BJ (cell line): ENCODE measurements at regions of chr1 and their contacts with region 1.

Region 1: DNA sequence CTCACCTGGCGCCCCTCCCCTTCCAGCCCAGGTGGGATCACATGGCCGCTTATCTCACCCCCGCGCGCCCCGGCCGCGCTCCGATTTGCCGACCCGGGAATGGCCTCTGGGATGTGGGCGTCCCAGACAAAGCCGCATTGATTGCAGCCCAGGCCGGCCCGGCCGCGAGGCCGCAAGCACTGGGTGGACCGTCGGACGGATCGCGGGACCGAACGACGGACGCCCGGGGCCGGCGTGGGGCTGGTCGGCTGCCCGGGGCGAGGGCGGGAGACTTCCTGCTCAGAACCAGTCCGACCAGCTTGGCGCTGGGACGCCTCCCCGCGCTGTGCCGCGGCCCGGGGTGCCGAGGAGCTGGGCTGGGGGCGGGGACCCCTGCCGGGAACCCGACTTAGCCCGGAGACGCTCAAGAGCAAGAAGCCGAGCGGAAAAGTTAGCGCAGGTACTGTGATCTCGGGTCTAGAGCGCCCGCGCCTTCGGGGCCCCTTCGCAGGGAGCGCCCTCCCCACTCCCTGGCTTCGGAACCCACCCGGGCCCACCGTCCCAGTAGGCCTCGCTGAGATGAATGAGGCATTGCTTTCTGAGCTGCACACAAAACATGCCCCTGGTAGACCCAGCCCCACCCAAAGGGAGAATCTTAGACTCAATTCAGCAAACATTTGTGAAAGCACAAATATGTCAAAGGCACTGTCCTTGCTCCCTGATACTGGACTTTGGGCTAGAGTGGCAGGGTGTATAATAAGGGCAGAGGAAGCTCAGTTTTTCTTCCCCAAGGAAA is 415 bp upstream of the LAD1 start:
- DNase-seq: no peak
- H3K4me3 ChIP-seq: no peak overlapping the region
- H3K27me3 ChIP-seq: peaks cover 53% of the 10 kb centered on the region
- CTCF ChIP-seq: no peak

Region 2: DNA sequence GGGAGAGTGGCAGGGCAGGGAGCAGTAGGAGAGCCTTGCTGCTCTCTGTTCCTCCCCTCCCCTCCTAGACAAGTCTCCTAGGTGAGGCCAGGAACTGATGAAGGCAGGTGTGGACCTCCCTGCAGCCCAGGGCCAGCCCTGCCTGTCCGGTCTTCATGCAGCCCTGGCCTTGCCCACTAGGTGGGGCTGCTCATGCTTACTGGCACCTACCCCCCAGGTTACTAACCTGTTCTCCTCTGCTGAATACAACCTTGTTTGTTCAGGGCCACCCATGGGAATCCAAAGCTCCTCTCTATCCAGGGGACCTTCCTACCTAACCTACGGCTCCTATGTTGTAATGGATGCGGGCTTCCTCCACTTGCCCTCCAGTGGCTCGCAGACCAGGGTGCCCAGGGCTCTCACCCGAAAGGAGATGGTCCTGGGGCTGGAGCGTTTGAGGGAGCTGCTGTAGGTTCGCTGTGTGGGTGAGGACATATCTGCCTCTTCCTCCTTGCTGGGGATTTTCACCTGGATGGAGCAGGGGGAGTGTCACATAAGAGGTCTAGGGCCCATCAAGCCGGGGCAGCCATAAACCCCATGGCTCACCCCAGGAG is 14.1 kb before region 1 on chr1:
- CTCF ChIA-PET with region 1: interaction called, 59 read pairs
- POLR2A ChIA-PET with region 1: no interaction called
- DNase-seq: no peak
- H3K4me3 ChIP-seq: no peak overlapping the region
- H3K27me3 ChIP-seq: no peaks in the 10 kb centered on the region; the same call in 1 of the 2 replicates
- CTCF ChIP-seq: peak; percentile 90

Region 3: DNA sequence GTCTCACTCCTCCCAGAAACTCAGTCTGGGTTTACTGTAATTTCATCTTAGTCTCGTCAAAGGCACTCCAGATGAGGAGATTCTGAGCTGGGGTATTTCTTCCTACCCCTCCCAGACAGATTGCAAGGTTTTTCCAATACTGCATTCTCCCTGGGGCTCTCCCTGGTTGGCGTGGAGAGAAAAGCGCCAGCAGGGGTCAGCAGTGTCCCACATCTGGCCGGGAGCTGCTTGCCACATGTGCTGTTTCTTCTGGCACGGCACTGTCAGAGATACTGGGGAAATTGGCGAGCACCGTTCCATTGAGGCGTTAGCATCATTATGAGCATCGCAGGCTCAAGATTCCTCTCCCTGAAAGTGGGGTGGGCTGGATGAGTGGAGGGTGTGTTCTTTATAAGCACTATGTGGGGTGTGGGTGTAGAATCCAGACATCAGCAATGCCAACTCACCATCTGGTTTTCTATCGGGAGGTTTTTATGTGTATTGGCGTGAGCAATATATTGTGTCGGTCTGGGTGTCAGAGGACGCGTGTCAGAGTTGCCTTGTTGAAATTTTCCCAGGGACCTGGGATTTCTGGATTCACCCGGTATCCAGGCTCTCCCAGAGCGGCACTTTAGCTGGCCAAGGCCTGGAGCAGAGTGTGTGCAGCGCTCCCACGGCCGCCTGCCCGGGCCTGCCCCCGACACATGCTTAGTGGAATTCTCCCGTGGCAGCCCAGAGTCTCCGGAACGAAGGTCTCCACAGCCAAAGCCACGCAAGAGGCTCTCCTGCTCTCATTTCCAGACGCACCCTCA is 131.4 kb after region 1 on chr1:
- CTCF ChIA-PET with region 1: no interaction called
- POLR2A ChIA-PET with region 1: no interaction called
- DNase-seq: peak; percentile 81
- H3K4me3 ChIP-seq: no peak overlapping the region
- H3K27me3 ChIP-seq: no peaks in the 10 kb centered on the region
- CTCF ChIP-seq: peak; percentile 89